ENCODE measurements at regions of chr22 and their contacts with region 1.

Region 1: GRCh38 chr22:22959147-22959827 is 71.7 kb downstream of the IGLL5 start:
- DNase-seq: peak in 1 of 3 donors; percentile 46
- H3K4me3 ChIP-seq: no peak overlapping the region
- H3K4me3 Mint-ChIP-seq: no peak overlapping the region
- H3K27ac ChIP-seq: no peak overlapping the region
- H3K27ac Mint-ChIP-seq: no peak overlapping the region
- H3K4me1 ChIP-seq: peaks cover 13 to 15% of the 10 kb centered on the region in 2 donors
- H3K4me1 Mint-ChIP-seq: peaks cover 13% of the 10 kb centered on the region
- H3K27me3 ChIP-seq: peaks cover 0 to 1% of the 10 kb centered on the region in 2 donors
- H3K27me3 Mint-ChIP-seq: peaks cover 11 to 22% (median 20%) of the 10 kb centered on the region in 3 donors
- CTCF ChIP-seq: peak; percentile 70

Region 2: GRCh38 chr22:22587577-22588188 is 371.6 kb before region 1 on chr22:
- intact Hi-C with region 1: loop called in 1 of 2 experiments (anchors 5 kb)
- DNase-seq: no peak
- H3K4me3 ChIP-seq: no peak overlapping the region
- H3K4me3 Mint-ChIP-seq: no peak overlapping the region
- H3K27ac ChIP-seq: no peak overlapping the region
- H3K27ac Mint-ChIP-seq: no peak overlapping the region
- H3K4me1 ChIP-seq: no peaks in the 10 kb centered on the region
- H3K4me1 Mint-ChIP-seq: no peaks in the 10 kb centered on the region
- H3K27me3 ChIP-seq: peaks cover 0 to under 1% of the 10 kb centered on the region in 2 donors
- H3K27me3 Mint-ChIP-seq: peaks cover 6 to 16% (median 8%) of the 10 kb centered on the region in 3 donors
- CTCF ChIP-seq: no peak

Region 3: GRCh38 chr22:22810018-22810427 is 149.3 kb before region 1 on chr22:
- intact Hi-C with region 1: loop called in 1 of 2 experiments (anchors 2 kb)
- DNase-seq: peak; percentile 31 to 73 (median 41)
- H3K4me3 ChIP-seq: no peak overlapping the region
- H3K4me3 Mint-ChIP-seq: no peak overlapping the region
- H3K27ac ChIP-seq: no peak overlapping the region
- H3K27ac Mint-ChIP-seq: no peak overlapping the region
- H3K4me1 ChIP-seq: peaks cover 27 to 33% of the 10 kb centered on the region in 2 donors
- H3K4me1 Mint-ChIP-seq: peaks cover 36% of the 10 kb centered on the region
- H3K27me3 ChIP-seq: no peaks in the 10 kb centered on the region
- H3K27me3 Mint-ChIP-seq: peaks cover 0 to 3% (median 0%) of the 10 kb centered on the region in 3 donors
- CTCF ChIP-seq: peak; percentile 99

Region 4: DNA sequence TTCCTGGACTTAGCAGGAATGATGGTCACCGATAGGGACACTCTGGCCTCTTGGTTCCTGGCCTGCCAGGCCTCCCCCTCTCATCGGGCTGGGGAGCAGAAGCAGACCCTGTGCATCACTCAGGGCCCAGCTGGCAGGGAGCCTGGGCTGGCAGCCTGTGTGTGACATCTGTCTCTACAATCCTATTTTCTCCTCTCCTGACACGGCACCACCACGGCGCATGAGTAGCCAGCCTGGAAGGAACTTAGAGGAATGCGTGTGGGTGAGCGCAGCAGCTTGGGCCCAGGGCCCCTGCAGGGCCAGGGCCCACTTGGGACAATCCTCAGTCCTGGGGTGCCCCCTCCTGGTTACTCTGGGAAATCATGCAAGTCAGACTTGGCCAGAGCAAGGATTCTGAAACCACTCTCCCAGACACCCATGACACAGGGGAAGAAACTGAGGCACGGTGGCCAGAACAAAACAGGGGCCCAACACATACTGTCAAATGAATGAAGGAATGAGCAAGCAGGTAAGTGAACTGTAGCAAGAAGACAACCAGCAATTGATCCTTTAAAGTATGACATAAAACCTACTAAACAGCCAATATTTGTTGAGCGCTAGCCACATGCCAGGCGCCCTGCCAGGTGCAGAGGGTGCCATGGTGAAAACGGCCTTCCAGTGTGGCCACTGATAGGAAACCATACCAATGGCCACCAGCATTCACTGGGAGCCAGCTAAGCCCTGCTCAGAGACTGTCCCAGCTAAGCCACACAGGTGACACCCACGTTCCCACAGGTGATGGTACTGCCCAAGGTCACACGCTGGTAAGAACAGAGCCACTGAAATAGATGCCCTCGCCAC is 169.2 kb after region 1 on chr22:
- intact Hi-C with region 1: loop called (anchors 2 to 5 kb)
- DNase-seq: peak; percentile 28 to 53 (median 51)
- H3K4me3 ChIP-seq: no peak overlapping the region
- H3K4me3 Mint-ChIP-seq: no peak overlapping the region
- H3K27ac ChIP-seq: no peak overlapping the region
- H3K27ac Mint-ChIP-seq: peak overlapping the region in 1 of 7 donors; percentile 47
- H3K4me1 ChIP-seq: no peaks in the 10 kb centered on the region
- H3K4me1 Mint-ChIP-seq: peaks cover 2% of the 10 kb centered on the region
- H3K27me3 ChIP-seq: no peaks in the 10 kb centered on the region
- H3K27me3 Mint-ChIP-seq: peaks cover 0 to 7% (median 6%) of the 10 kb centered on the region in 3 donors
- CTCF ChIP-seq: peak; percentile 83